Caco-2 (cell line): ENCODE measurements at regions of chr1 and their contacts with region 1.

Region 1: DNA sequence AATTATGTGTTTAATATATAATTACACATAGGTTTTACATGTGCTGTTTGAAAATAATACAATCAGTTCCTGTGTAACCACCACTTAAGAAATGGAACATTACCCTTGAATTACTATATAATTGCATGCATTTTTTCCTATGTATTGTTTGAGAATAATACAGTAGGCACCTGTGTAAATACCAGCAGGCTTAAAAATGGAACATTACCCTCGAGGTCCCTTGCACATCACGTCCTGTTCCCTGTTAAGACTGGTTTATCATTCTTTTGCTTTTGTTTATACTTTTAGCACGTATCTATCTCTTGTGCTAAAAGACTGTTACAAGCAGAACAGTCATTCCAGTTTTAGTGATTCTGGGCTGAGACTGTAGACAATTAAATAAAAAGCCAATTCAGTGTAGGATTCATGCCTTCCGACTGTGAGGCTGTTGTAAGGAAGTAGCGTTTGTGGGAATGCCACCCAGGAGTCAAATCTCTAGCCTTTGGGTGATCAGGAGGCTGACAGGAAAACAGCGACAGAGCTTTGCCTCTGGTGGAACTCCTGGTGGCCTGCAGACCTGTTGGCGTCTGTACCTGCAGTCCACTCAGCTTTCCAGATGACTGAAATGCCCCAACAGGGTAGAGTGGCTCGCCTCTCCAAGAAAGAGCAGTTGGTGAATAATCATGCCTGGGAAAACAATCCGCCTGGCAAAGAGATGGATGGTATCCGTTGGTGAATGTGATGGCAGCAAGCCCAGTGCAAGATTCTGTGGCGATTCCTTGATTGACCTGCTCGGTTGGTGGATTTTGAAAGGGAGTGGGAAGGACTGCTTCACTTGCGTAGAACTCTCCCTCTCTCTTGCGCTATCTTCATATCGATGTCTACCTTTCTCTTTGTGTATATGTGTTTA is 58.0 kb downstream of the DISC1 start:
- DNase-seq: no peak
- H3K4me3 ChIP-seq: no peak overlapping the region
- H3K4me3 Mint-ChIP-seq: no peak overlapping the region
- H3K27ac Mint-ChIP-seq: no peak overlapping the region
- H3K4me1 ChIP-seq: no peaks in the 10 kb centered on the region
- H3K4me1 Mint-ChIP-seq: no peaks in the 10 kb centered on the region
- H3K27me3 ChIP-seq: no peaks in the 10 kb centered on the region
- H3K27me3 Mint-ChIP-seq: no peaks in the 10 kb centered on the region
- CTCF ChIP-seq: no peak

Region 2: GRCh38 chr1:231632119-231632518 is 52.5 kb before region 1 on chr1:
- CTCF ChIA-PET with region 1: no interaction called
- POLR2A ChIA-PET with region 1: no interaction called
- intact Hi-C with region 1: loop called (anchors 1 kb)
- DNase-seq: peak in 1 of 2 experiments; percentile 4
- H3K4me3 ChIP-seq: no peak overlapping the region
- H3K4me3 Mint-ChIP-seq: no peak overlapping the region
- H3K27ac Mint-ChIP-seq: no peak overlapping the region
- H3K4me1 ChIP-seq: peaks cover 25% of the 10 kb centered on the region
- H3K4me1 Mint-ChIP-seq: no peaks in the 10 kb centered on the region
- H3K27me3 ChIP-seq: no peaks in the 10 kb centered on the region
- H3K27me3 Mint-ChIP-seq: no peaks in the 10 kb centered on the region
- CTCF ChIP-seq: no peak